Adrenal gland (tissue), 19 donors: ENCODE measurements at regions of chr17 and their contacts with region 1.

Region 1: DNA sequence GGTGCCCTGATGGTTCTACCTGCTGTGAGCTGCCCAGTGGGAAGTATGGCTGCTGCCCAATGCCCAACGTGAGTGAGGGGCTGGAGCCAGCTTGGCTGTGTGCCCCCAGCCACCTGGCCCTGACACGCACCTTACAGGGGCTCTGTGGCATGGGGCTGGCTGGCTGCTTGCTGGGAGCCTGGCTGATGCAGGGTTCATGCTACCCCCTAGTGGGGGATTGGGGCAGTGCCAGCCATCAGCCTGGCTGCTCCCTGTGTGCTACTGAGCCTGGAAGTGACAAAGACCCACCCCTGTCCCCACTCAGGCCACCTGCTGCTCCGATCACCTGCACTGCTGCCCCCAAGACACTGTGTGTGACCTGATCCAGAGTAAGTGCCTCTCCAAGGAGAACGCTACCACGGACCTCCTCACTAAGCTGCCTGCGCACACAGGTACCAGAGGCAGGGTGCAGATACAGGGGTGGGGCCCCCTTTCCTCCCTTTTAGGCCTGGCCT is 5.7 kb downstream of the GRN start:
- DNase-seq: peak in 6 of 7 donors; percentile 62 to 89 (median 68)
- H3K4me3 ChIP-seq: no peak overlapping the region
- H3K27ac ChIP-seq: no peak overlapping the region
- H3K4me1 ChIP-seq: peaks cover 0 to 9% of the 10 kb centered on the region in 2 donors
- H3K27me3 ChIP-seq: no peaks in the 10 kb centered on the region
- CTCF ChIP-seq: peak; percentile 34 to 77 (median 61)
- POLR2A ChIP-seq: no peak

Region 2: DNA sequence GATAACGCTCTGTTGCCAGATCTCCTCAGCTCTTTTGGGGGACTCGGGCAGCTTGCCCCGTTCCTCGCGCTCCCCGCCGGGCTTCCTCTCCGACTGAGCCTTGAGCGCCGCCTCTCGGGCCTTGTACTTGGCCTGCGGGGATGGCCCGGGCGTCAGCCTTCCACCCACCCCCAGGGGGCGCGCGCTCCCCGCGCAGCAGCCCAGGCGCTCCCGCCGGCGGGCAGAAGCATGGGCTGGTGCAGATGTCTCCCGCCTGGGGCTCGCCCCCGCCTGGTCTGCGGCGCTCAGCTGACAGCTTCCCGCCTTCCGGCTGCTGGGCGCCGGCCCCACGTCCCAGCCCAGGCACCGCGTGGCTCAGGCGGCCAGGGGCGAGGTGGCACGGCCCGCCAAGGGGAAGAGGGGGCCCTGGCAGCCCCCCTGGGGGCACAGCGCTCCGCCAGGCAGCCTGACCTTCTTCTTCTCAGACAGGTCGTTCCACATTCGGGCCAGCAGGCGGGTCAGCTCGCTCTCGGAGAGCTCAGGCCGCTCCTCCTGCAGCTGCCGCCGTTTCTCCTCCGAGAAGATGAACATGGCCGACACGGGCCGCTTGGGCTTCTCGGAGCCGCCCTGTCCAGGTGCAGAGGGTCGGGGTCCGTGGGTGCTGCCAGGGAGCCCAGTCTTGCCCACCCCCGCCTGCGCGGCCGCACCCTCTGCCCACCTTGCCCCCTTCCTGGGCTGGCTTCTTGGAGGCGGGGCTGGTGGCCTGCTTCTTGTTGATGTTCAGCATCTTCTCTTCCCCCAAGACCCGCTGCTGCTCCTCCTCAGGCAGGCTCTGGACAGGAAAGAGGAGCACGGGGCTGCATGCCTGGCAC is 140.2 kb before region 1 on chr17:
- intact Hi-C with region 1: loop called in 1 of 2 experiments (anchors 5 kb)
- DNase-seq: peak; percentile 88 to 94 (median 92)
- H3K4me3 ChIP-seq: no peak overlapping the region
- H3K27ac ChIP-seq: peak overlapping the region in 4 of 5 donors; percentile 5 to 79 (median 40)
- H3K4me1 ChIP-seq: peaks cover 16 to 32% of the 10 kb centered on the region in 2 donors
- H3K27me3 ChIP-seq: no peaks in the 10 kb centered on the region
- CTCF ChIP-seq: peak; percentile 93 to 100 (median 97)
- POLR2A ChIP-seq: peak in 1 of 2 donors; percentile 49

Region 3: GRCh38 chr17:44417553-44417952 is 66.8 kb after region 1 on chr17:
- intact Hi-C with region 1: no loop called
- DNase-seq: peak in 3 of 7 donors; percentile 45 to 56 (median 54)
- H3K4me3 ChIP-seq: no peak overlapping the region
- H3K27ac ChIP-seq: peak overlapping the region in 3 of 5 donors; percentile 1 to 46 (median 33)
- H3K4me1 ChIP-seq: peaks cover 4 to 14% of the 10 kb centered on the region in 2 donors
- H3K27me3 ChIP-seq: no peaks in the 10 kb centered on the region
- CTCF ChIP-seq: no peak
- POLR2A ChIP-seq: no peak